Esophagus muscularis mucosa (tissue), 4 donors: ENCODE measurements at regions of chr15 and their contacts with region 1.

Region 1: DNA sequence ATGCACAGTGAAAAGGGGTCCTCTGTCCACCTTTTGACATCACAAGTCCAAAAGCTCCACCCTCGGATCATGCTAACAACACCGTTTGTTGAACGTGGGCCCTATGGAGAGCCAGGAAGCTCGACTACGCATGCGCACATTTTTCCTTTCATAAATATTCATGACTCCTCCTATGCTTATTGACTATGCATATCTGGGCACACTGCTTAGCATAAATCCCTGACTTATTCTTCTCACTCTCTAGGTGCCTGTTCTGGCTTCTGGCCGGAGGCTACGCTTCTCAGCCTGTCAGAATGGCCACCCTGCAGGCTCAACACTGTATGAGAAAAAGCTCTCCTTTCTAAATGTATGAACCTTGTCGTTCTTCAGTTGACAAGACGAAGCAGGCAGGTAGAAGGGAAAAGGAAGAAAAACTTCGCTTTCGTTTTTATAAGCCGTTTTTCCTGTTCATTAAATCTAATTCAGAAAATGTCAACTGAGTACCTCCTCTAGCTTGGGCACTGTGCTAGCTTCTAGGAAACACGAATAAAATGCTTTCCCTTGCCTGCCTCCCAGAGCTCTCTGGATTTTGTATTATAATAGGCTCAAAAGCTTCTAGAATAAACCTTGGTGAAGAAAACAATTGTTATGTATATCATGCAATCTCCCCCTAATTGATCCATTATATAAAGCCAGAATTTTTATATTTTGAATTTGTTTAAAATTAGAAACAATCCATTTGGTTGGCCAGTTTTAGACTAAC is 207.7 kb downstream of the ATP10A start:
- DNase-seq: no peak
- H3K4me3 ChIP-seq: no peak overlapping the region
- H3K27ac ChIP-seq: no peak overlapping the region
- H3K4me1 ChIP-seq: no peaks in the 10 kb centered on the region
- H3K27me3 ChIP-seq: no peaks in the 10 kb centered on the region
- CTCF ChIP-seq: no peak
- EP300 ChIP-seq: no peak
- POLR2A ChIP-seq: no peak

Region 2: DNA sequence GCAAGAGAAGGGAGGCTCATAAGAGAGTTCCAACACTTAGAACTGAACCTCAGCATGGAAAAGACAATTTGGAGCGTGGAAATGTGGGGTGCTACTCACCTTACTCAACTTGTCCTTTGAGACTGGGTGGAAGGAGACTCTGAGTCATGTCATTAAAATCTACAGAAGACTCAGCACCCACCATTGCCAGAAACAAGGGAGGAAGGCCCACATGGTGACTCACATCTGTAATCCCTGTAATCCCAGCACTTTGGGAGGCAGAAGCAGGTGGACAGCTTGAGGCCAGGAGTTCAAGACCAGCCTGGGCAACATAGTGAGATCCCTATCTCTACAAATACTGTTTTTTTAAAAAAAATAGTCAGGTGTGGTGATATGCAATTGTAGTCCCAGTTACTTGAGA is 54.6 kb before region 1 on chr15:
- intact Hi-C with region 1: loop called (anchors 10 kb)
- DNase-seq: no peak
- H3K4me3 ChIP-seq: no peak overlapping the region
- H3K27ac ChIP-seq: no peak overlapping the region
- H3K4me1 ChIP-seq: no peaks in the 10 kb centered on the region
- H3K27me3 ChIP-seq: no peaks in the 10 kb centered on the region
- CTCF ChIP-seq: no peak
- EP300 ChIP-seq: no peak
- POLR2A ChIP-seq: no peak

Region 3: DNA sequence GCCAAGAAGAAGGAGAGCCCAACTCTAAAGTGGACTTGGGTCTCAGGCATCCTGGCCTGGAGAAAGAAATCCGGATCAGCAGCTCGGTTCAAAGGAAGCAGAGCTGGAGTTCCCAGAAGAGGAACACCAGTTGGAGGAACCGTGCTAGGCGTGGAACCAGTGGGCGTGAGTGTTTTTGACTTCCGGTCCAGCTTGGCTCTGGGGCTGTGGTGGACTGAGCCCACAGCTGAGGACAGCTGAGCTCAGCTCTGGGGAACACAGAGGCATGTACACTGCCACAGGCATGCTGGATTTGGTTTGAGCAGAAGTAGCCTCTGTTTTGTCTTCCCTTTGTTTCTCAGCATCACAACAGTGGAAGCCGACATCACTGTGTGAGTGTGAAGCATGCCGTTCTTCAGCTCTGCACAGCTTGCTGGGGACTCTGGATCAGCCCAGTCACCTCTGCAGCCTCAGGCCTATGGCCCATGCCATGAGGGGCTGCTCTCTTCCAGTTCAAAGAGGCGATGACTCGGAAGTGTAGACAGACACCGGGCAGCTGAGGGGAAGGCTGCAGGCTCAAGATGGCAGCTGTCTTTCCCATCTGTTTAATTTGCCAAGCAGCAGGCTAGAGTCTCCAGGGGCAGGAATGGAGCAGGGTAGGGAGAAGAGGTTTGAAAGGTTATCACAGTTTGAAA is 30.7 kb before region 1 on chr15:
- intact Hi-C with region 1: no loop called
- DNase-seq: no peak
- H3K4me3 ChIP-seq: no peak overlapping the region
- H3K27ac ChIP-seq: no peak overlapping the region
- H3K4me1 ChIP-seq: no peaks in the 10 kb centered on the region
- H3K27me3 ChIP-seq: no peaks in the 10 kb centered on the region
- CTCF ChIP-seq: no peak
- EP300 ChIP-seq: no peak
- POLR2A ChIP-seq: no peak